ENCODE measurements at regions of chr1 and their contacts with region 1.

Region 1: DNA sequence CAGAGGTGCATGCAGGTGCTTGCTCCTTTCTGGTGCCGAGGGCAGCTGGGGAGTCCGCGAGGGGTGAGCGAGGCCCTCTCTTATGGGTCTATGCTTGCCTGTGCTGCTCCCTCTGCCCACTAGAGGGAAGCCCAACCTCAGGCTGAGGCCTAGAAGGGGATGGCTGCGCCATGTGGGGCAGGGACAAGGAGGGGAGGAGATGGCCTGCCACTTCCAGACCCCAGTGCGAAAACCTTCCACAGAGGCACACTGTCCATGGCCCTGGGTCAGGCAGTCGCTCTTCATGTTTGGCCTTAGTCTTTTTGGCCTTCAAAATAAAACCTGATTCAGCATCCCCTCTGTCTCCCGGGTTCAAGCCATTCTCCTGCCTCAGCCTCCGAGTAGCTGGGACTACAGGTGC is 14.0 kb downstream of the RHBG start:
- DNase-seq: peak; percentile 87
- CTCF ChIP-seq: peak; percentile 84

Region 2: DNA sequence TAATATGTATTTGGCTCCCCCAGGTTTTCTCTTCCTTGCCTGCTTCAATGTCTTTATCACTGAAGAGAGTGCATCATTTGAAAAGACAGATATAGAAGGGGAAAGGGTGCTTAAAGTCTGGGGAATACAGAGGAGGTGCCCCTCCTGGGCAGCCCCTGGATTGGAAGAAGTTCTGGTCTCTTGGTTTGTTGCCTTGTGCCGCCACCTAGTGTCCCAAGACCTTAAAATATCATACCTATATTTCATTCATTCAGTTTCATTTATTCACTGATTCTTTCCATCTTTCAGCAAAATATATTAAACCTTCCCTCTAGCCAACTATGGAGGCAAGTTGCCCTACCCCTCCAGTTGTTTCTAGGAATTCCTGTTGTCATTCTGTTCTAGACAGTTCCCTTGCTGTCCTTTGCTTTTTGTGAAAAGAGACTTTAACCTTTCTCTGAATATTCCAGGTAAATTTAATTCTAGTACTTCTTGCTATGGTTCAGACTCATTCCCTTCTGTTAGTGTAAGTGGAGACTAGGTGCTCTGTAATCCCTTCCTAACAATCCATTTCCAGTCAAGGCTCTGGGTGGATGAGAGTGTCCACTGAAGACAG is 61.5 kb after region 1 on chr1:
- in situ Hi-C with region 1: loop called (anchors 5 kb)
- DNase-seq: peak; percentile 52
- CTCF ChIP-seq: peak; percentile 41

Region 3: GRCh38 chr1:156601122-156601830 is 218.3 kb after region 1 on chr1 and contains the start of gene GPATCH4:
- in situ Hi-C with region 1: loop called (anchors 10 kb)
- DNase-seq: peak; percentile 73
- CTCF ChIP-seq: no peak